ENCODE measurements at regions of chr6 and their contacts with region 1.

Region 1: GRCh38 chr6:33761922-33762629 is 15.4 kb upstream of the IP6K3 start:
- DNase-seq: peak; percentile 91
- ATAC-seq: peak; percentile 95

Region 2: DNA sequence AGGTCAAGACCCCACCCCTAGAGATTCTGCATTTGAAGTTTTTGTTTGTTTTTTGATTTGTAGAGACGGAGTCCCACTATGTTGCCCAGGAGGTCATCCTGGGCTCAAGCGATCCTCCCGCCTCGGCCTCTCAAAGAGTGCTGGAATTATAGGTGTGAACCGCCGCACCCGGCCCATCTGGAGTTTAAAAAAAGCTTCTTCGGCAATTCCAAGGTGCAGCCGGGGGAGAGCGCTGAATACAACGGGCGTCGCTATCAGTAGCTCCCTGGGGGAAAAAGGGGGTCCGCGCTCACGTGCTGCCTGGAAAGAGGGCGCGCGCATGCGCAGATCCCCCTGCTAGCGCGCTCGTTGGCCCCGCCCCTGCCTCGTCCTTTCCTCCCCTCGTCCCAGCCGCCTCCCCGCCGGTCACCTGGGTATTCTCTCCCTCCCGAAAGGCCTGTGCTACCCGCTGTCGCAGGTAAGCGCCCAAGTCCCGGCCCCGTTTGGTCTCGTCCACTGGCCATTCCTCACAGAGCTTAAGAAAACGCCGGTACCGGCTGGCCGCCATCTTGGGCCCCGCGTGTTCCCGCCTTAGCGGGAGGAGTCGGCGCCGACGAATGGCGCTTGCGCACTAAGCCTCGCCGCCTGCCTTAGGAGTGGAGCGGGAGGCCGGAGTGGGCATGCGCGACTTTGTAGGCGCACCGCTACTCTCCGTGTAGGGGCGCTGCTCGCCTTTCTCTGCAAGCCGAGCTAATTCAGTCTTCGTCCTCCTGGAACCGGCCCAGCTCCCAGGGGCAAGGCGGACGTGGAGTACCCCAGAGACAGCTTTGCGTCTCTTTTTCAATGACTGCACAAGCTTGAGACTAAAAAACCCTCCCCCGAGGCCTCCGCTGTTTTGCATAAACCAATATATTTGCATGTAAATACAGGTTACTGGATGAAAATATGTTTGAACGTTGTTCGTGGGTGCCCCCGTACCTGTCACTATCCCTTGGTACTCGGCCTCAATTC is 50.6 kb before region 1 on chr6 and contains the start of gene UQCC2:
- intact Hi-C with region 1: loop called (anchors 1 kb)
- DNase-seq: peak; percentile 99
- ATAC-seq: peak; percentile 98
- total RNA-seq, gene UQCC2: 215 TPM

Measured in Right ventricle myocardium inferior (tissue), 1 donor.